ENCODE measurements at regions of chr2 and their contacts with region 1.

Region 1: DNA sequence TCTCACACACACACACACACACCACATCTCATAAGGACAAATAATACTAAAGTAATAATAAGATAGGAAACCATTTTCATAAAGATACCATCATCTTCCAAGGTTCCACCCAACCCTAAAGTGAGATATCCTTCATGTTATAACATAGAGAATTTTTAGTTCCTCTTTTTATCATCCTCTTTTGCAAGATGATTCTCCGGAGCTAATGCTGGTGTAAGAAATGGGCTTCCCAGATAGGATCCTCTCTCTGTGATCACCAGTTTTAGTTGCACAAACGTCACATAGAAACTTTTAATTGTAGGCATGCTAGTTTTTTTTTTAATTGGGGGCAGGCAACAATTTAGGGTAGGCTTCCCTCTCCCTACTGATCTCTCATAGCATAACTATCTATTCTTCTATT is 49.6 kb downstream of the ARHGAP25 start:
- DNase-seq: peak; percentile 53
- ATAC-seq: peak; percentile 35
- H3K4me3 ChIP-seq: peak overlapping the region in 2 of 5 experiments; percentile 2 to 38
- H3K4me3 Mint-ChIP-seq: no peak overlapping the region
- H3K27ac ChIP-seq: peak overlapping the region; percentile 55 to 96
- H3K27ac Mint-ChIP-seq: no peak overlapping the region
- H3K4me1 ChIP-seq: peaks cover 98 to 100% of the 10 kb centered on the region in 2 donors
- H3K4me1 Mint-ChIP-seq: peaks cover 39% of the 10 kb centered on the region
- H3K27me3 ChIP-seq: no peaks in the 10 kb centered on the region
- H3K27me3 Mint-ChIP-seq: no peaks in the 10 kb centered on the region
- CTCF ChIP-seq: no peak

Region 2: GRCh38 chr2:68766376-68766845 is 17.8 kb before region 1 on chr2:
- CTCF ChIA-PET with region 1: interaction called, 15 read pairs
- POLR2A ChIA-PET with region 1: interaction called, 14 read pairs
- intact Hi-C with region 1: no loop called
- DNase-seq: peak; percentile 74
- ATAC-seq: peak; percentile 44
- H3K4me3 ChIP-seq: peak overlapping the region in 3 of 5 experiments; percentile 9 to 48 (median 16)
- H3K4me3 Mint-ChIP-seq: peak overlapping the region; percentile 80
- H3K27ac ChIP-seq: peak overlapping the region; percentile 93 to 99
- H3K27ac Mint-ChIP-seq: peak overlapping the region; percentile 98
- H3K4me1 ChIP-seq: peaks cover 97 to 100% of the 10 kb centered on the region in 2 donors
- H3K4me1 Mint-ChIP-seq: peaks cover 94% of the 10 kb centered on the region
- H3K27me3 ChIP-seq: no peaks in the 10 kb centered on the region
- H3K27me3 Mint-ChIP-seq: no peaks in the 10 kb centered on the region
- CTCF ChIP-seq: no peak

Region 3: DNA sequence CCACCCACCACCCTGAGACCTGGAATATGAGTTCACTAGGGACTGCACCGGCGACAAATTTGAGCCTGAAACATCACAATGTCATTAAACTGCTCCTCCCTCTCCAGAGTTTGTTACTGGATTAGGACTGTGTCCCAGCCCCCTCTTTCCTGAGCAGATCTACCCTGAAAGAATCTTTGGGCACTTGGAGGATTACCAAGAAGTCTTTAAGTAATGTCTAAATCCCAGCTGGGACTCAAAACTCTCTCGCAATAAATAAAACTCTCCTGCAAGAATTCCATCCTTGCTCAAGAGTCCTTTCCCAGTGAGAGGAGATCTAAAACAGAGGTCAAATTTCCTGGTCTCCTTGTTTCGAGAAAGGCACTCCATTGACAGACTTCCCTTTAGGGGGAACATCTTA is 147.6 kb after region 1 on chr2:
- CTCF ChIA-PET with region 1: no interaction called
- POLR2A ChIA-PET with region 1: no interaction called
- intact Hi-C with region 1: no loop called
- DNase-seq: no peak
- ATAC-seq: no peak
- H3K4me3 ChIP-seq: no peak overlapping the region
- H3K4me3 Mint-ChIP-seq: no peak overlapping the region
- H3K27ac ChIP-seq: no peak overlapping the region
- H3K27ac Mint-ChIP-seq: no peak overlapping the region
- H3K4me1 ChIP-seq: no peaks in the 10 kb centered on the region
- H3K4me1 Mint-ChIP-seq: no peaks in the 10 kb centered on the region
- H3K27me3 ChIP-seq: peaks cover 0 to 5% (median 0%) of the 10 kb centered on the region in 4 experiments
- H3K27me3 Mint-ChIP-seq: peaks cover 8% of the 10 kb centered on the region
- CTCF ChIP-seq: no peak

Measured in B cell (primary cell).